ENCODE measurements at regions of chr5 and their contacts with region 1.

Region 1: DNA sequence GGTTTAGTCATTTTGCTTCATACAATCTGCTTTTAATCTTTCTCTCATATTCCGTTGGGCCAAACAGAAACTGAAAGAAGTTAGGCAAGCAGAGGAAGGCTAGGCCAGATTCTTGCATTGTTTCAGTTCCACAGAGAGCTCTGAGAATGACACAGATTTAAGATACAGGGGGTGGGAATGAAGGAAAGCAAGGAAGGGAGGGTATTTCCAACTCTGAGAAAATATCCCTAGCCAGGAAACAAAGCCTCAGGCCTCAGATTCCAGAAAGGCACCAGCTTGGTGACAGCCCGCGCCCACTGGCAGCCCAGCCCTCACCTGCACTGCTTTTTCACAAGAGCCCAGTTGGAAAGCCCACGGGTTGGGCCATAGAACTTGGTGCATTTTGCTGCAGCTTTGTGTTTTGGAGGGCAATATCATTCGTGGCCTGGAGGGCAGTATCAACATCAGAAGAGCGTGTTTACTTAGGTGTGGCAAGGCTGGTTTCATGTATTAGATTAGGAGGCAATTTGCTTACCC is 63.5 kb downstream of the ENC1 start:
- DNase-seq: peak; percentile 12
- H3K4me3 Mint-ChIP-seq: peak overlapping the region; percentile 21
- H3K27ac Mint-ChIP-seq: peak overlapping the region; percentile 53
- H3K4me1 Mint-ChIP-seq: peaks cover 34% of the 10 kb centered on the region
- H3K27me3 Mint-ChIP-seq: peaks cover 12% of the 10 kb centered on the region

Region 2: GRCh38 chr5:73895426-73895825 is 681.6 kb before region 1 on chr5:
- intact Hi-C with region 1: loop called (anchors 2 kb)
- DNase-seq: no peak
- H3K4me3 Mint-ChIP-seq: no peak overlapping the region
- H3K27ac Mint-ChIP-seq: peak overlapping the region; percentile 88
- H3K4me1 Mint-ChIP-seq: peaks cover 25% of the 10 kb centered on the region
- H3K27me3 Mint-ChIP-seq: peaks cover 14% of the 10 kb centered on the region

Region 3: GRCh38 chr5:74622122-74622521 is 45.1 kb after region 1 on chr5:
- intact Hi-C with region 1: loop called (anchors 1 kb)
- DNase-seq: no peak
- H3K4me3 Mint-ChIP-seq: no peak overlapping the region
- H3K27ac Mint-ChIP-seq: no peak overlapping the region
- H3K4me1 Mint-ChIP-seq: peaks cover 12% of the 10 kb centered on the region
- H3K27me3 Mint-ChIP-seq: peaks cover 29% of the 10 kb centered on the region

Region 4: DNA sequence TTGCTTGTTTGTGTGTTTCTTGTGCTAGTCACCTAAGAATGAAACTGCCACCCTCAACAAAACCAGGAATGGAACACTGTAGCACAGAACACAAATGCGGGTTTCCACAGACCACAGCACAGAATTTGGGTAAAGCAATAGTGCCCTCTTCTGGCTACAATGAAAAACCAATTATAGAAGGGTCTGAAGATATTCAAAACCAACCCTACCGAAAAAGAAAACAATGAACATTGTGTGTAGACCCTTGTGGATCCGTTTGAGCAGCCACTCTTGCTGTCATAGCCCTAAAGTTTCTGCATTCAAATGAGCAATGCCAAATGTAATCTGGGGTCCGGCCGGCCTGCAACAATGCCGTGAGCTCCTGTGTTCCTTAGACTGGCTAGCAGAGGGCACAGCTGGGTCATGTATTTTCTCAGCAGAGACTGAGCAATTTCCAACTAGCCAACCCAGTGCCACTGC is 71.9 kb after region 1 on chr5:
- intact Hi-C with region 1: loop called (anchors 1 kb)
- DNase-seq: peak; percentile 26
- H3K4me3 Mint-ChIP-seq: no peak overlapping the region
- H3K27ac Mint-ChIP-seq: no peak overlapping the region
- H3K4me1 Mint-ChIP-seq: peaks cover 10% of the 10 kb centered on the region
- H3K27me3 Mint-ChIP-seq: peaks cover 41% of the 10 kb centered on the region

Region 5: DNA sequence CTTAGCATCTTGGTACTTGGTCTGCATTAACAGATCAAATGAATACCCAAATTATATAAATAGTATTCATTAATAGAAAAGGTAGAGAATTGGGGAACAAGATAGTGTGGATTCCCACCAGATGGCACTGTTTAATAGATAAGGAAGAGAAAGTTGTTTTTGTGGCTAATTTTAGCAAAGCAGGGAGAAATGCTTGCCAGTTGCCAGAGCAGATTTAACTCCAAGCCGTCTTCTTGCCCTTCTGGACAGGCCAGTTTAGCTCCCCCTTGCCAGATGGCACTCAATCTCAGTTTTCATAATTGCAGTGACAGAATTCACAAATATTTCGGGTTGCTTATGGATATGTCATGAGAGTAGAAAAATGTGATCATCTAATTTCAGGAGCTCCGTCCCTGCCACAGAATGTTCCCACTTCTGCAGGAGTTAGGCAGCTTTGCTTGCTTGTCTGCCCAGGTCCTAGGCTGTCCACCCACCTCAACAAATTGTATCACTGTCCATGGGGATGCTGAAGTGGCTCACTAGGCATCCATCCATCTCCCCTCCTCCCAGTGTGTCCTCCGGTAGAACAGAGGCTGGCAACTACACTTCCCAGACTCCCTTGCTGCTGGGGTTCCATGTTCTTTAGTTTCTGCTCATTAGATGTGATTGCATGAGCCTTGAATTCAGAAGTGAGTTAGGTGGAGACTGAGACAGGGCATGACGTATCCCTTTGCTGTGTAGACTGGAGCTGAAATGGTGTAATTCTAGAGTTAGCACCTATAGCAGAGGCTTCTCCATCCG is 96.2 kb after region 1 on chr5:
- intact Hi-C with region 1: no loop called
- DNase-seq: no peak
- H3K4me3 Mint-ChIP-seq: no peak overlapping the region
- H3K27ac Mint-ChIP-seq: no peak overlapping the region
- H3K4me1 Mint-ChIP-seq: no peaks in the 10 kb centered on the region
- H3K27me3 Mint-ChIP-seq: peaks cover 7% of the 10 kb centered on the region

Region 6: GRCh38 chr5:75336625-75337339 is 759.8 kb after region 1 on chr5 and contains the start of gene HMGCR:
- intact Hi-C with region 1: loop called (anchors 5 kb)
- DNase-seq: peak; percentile 96
- H3K4me3 Mint-ChIP-seq: no peak within 1 kb of the TSS
- H3K27ac Mint-ChIP-seq: no peak within 1 kb of the TSS
- H3K4me1 Mint-ChIP-seq: peaks cover 40% of the 10 kb centered on the region
- H3K27me3 Mint-ChIP-seq: no peaks in the 10 kb centered on the region
- total RNA-seq, gene HMGCR: 95.7 and 113 TPM in 2 replicates

Measured in activated T-helper 1 cell treated with anti-CD3 and anti-CD28 coated beads, Interleukin-12 subunit alpha, Interleukin-12 subunit beta, Interleukin-2, Interleukin-4 antibody, amounts not matched to agents 30 ng/mL and 10 ng/mL and 1 ng/mL, durations not matched to agents 14 hours and 24 hours and 36 hours (primary cell).